ENCODE measurements at regions of chrX and their contacts with region 1.

Region 1: DNA sequence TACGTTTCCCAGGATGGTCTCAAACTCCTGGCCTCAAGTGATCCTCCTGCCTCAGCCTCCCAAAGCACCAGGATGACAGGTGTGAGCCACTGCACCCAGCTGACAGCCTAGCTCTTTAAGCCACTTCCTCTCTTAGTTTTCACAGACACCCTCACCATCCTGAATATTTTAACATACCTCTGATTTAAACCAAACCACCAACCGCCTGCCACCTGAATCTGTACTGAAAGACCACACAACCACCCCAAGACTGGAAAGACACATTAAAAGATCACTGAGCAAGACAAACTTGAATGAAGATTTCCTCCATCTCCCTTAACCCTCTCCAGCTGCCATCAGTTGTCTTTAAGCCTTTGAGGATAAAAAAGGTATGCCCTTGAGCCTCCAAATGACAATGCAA is 110.6 kb downstream of the SH3KBP1 start:
- DNase-seq: peak; percentile 61
- ATAC-seq: peak; percentile 45
- H3K4me3 Mint-ChIP-seq: peak overlapping the region; percentile 8
- H3K27ac Mint-ChIP-seq: peak overlapping the region; percentile 89
- H3K4me1 Mint-ChIP-seq: peaks cover 70% of the 10 kb centered on the region
- H3K27me3 Mint-ChIP-seq: no peaks in the 10 kb centered on the region

Region 2: GRCh38 chrX:19739683-19740082 is 37.1 kb before region 1 on chrX:
- CTCF ChIA-PET with region 1: interaction called, 3 read pairs
- POLR2A ChIA-PET with region 1: interaction called, 3 read pairs
- intact Hi-C with region 1: loop called in 1 of 2 experiments (anchors 2 kb)
- DNase-seq: peak; percentile 61
- ATAC-seq: peak; percentile 51
- H3K4me3 Mint-ChIP-seq: no peak overlapping the region
- H3K27ac Mint-ChIP-seq: peak overlapping the region; percentile 66
- H3K4me1 Mint-ChIP-seq: peaks cover 81% of the 10 kb centered on the region
- H3K27me3 Mint-ChIP-seq: no peaks in the 10 kb centered on the region

Region 3: GRCh38 chrX:19791562-19791961 is 14.8 kb after region 1 on chrX:
- CTCF ChIA-PET with region 1: interaction called, 3 read pairs
- POLR2A ChIA-PET with region 1: no interaction called
- intact Hi-C with region 1: loop called in 1 of 2 experiments (anchors 2 kb)
- DNase-seq: no peak
- ATAC-seq: peak; percentile 76
- H3K4me3 Mint-ChIP-seq: peak overlapping the region; percentile 36
- H3K27ac Mint-ChIP-seq: peak overlapping the region; percentile 67
- H3K4me1 Mint-ChIP-seq: peaks cover 73% of the 10 kb centered on the region
- H3K27me3 Mint-ChIP-seq: no peaks in the 10 kb centered on the region

Region 4: DNA sequence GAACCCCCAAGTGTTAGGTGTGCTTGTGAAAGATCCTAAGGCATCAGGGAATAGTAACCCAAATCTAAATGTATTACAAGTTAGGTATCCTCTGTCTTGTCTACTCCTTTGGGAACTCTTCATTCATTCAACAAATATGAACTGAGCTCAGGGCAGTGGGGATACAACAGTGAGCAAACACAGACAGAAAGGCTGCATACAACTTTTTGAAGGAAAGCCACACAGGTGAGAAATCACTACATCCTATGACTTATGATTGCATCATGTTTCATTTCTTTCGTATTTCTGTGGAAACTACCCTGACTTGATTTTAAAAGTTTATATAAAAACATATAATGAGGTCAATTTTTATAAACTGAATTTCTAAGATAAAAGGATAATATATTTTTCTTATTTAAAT is 170.9 kb after region 1 on chrX:
- CTCF ChIA-PET with region 1: no interaction called
- POLR2A ChIA-PET with region 1: no interaction called
- intact Hi-C with region 1: no loop called
- DNase-seq: no peak
- ATAC-seq: peak; percentile 80
- H3K4me3 Mint-ChIP-seq: no peak overlapping the region
- H3K27ac Mint-ChIP-seq: no peak overlapping the region
- H3K4me1 Mint-ChIP-seq: peaks cover 7% of the 10 kb centered on the region
- H3K27me3 Mint-ChIP-seq: no peaks in the 10 kb centered on the region

Region 5: DNA sequence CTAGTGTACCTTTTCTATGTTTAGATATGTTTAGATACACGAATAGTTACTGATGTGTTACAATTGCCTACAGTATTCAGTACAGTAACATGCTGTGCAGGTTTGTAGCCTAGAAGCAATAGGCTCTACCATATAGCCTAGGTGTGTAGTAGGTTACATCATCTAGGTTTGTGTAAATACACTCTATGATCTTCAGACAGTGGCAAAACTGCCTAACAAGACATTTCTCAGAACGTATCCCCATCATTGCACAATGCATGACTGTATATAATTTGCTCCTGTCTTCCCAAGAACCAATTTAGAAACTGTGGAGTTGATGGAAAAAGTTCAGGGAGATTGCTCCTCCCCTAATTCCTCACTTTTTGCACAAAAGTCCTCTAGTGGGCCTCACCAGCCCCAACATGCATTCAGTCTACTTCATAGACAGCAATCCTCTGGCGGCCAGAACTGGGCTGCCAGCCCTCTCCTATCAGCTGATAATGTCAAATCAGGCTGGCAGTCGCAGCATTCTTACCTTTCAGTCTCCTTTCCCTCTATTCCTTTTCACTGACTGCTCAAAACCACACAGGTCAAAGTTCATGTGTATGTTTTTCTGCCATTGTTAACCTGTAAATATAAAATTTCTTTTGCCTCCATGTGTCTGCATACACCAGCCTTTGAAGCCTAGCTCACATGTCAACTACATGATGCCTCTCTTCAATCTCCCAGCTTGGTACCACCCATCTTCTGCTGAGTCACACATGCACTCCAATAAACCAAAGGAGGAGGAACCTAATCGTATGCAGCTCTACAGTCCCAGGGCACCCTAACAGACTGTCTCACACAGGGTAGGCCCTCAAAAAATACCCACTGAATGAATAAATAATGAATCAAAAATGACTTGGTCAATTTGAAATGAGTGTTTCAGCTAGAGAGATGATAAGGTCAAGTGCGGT is 182.1 kb after region 1 on chrX:
- CTCF ChIA-PET with region 1: no interaction called
- POLR2A ChIA-PET with region 1: no interaction called
- intact Hi-C with region 1: no loop called
- DNase-seq: no peak
- ATAC-seq: no peak
- H3K4me3 Mint-ChIP-seq: no peak overlapping the region
- H3K27ac Mint-ChIP-seq: no peak overlapping the region
- H3K4me1 Mint-ChIP-seq: peaks cover 10% of the 10 kb centered on the region
- H3K27me3 Mint-ChIP-seq: no peaks in the 10 kb centered on the region

Measured in activated CD4-positive, alpha-beta T cell treated with anti-CD3 and anti-CD28 coated beads for 36 hours (primary cell).